Activated CD4-positive, alpha-beta T cell treated with anti-CD3 and anti-CD28 coated beads for 36 hours (primary cell): ENCODE measurements at regions of chr10 and their contacts with region 1.

Region 1: GRCh38 chr10:129971381-129972144 is 7.5 kb upstream of the EBF3 start:
- DNase-seq: peak; percentile 78
- ATAC-seq: peak; percentile 79
- H3K4me3 Mint-ChIP-seq: peak overlapping the region; percentile 38
- H3K27ac Mint-ChIP-seq: no peak overlapping the region
- H3K4me1 Mint-ChIP-seq: peaks cover 9% of the 10 kb centered on the region
- H3K27me3 Mint-ChIP-seq: peaks cover 62% of the 10 kb centered on the region

Region 2: GRCh38 chr10:128263891-128264688 is 1707.5 kb before region 1 on chr10:
- CTCF ChIA-PET with region 1: no interaction called
- POLR2A ChIA-PET with region 1: no interaction called
- intact Hi-C with region 1: loop called in 1 of 2 experiments (anchors 2 kb)
- DNase-seq: peak; percentile 77
- ATAC-seq: peak; percentile 47
- H3K4me3 Mint-ChIP-seq: no peak overlapping the region
- H3K27ac Mint-ChIP-seq: no peak overlapping the region
- H3K4me1 Mint-ChIP-seq: no peaks in the 10 kb centered on the region
- H3K27me3 Mint-ChIP-seq: peaks cover 33% of the 10 kb centered on the region

Region 3: DNA sequence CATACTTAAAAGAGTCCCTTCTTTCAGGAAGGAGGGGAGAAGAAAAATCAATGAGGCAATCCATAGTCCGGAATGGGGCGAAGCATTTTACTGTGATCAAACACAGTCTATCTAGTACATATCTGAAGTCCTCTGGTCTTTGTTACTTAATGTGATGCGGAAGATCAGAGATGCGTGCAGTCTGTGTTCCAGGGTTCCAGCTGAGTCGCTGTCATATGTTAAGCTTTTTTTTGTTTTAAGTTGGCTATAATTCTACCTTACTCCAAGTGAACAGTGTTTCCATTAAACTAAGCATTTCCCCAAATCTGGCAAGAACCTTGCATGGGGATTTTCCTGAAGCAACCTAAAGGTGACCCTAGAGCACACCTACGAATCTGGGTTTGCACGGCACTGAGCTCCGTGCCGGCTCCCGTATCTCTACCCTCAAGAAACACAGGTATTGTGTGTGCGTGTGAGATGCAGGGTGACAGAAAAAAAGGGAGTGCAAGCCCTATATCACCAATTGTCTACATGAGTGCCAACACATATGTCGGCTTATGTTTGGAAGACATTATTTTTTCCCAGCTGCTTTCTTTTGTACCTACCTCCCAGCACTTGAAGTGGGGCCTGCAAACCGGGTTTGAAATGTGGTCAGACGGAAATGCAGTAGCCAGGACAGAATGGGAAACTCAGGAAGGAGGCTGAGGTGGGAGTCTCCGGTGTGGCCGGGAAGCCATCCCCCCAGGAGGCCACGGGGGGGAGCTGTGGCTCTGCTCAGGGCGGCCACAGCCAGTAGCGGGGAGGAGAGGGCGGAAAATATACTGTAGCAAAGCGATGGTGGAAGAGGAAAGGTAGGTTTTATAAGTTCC is 940.3 kb before region 1 on chr10:
- CTCF ChIA-PET with region 1: interaction called, 3 read pairs
- POLR2A ChIA-PET with region 1: no interaction called
- intact Hi-C with region 1: loop called (anchors 1 to 2 kb)
- DNase-seq: peak; percentile 73
- ATAC-seq: peak; percentile 79
- H3K4me3 Mint-ChIP-seq: no peak overlapping the region
- H3K27ac Mint-ChIP-seq: no peak overlapping the region
- H3K4me1 Mint-ChIP-seq: peaks cover 16% of the 10 kb centered on the region
- H3K27me3 Mint-ChIP-seq: peaks cover 20% of the 10 kb centered on the region

Region 4: GRCh38 chr10:129888784-129889616 is 82.6 kb before region 1 on chr10:
- CTCF ChIA-PET with region 1: no interaction called
- POLR2A ChIA-PET with region 1: no interaction called
- intact Hi-C with region 1: loop called (anchors 1 to 5 kb)
- DNase-seq: peak; percentile 70
- ATAC-seq: peak; percentile 61
- H3K4me3 Mint-ChIP-seq: no peak overlapping the region
- H3K27ac Mint-ChIP-seq: no peak overlapping the region
- H3K4me1 Mint-ChIP-seq: no peaks in the 10 kb centered on the region
- H3K27me3 Mint-ChIP-seq: no peaks in the 10 kb centered on the region

Region 5: GRCh38 chr10:130027716-130028464 is 56.3 kb after region 1 on chr10:
- CTCF ChIA-PET with region 1: no interaction called
- POLR2A ChIA-PET with region 1: no interaction called
- intact Hi-C with region 1: no loop called
- DNase-seq: no peak
- ATAC-seq: no peak
- H3K4me3 Mint-ChIP-seq: no peak overlapping the region
- H3K27ac Mint-ChIP-seq: no peak overlapping the region
- H3K4me1 Mint-ChIP-seq: no peaks in the 10 kb centered on the region
- H3K27me3 Mint-ChIP-seq: no peaks in the 10 kb centered on the region

Region 6: DNA sequence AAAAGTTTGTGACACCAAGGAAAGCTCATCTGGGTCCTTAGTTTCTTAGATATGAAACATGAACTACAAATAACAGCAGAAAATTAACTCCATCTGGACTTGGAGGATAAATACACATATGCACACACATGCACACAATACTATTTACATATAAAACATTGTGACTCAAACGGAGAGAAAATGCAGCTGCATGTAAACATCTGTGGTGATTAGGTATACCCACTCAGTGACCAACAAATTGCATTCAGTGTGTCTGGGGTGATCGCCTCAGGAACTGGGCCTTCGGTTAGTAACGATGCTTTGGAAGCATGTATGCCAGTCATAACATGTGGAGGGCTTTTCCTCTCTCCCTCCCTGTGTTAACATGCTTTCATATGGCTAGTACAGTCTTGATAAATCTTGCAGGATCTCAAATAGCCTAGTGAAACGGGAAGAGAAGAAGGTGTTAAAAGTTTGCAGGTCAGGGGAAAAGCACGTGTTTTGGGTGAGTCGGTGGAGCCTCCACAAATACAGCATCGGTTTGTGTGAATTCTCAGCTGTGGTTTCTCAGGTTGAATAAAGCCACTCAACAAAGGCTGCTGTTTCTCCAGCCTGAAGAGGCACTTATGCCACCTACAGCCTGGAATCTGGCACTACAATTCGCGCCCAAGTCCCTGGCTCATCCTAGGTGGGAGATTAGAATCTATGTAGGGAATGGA is 155.9 kb after region 1 on chr10:
- CTCF ChIA-PET with region 1: interaction called, 3 read pairs
- POLR2A ChIA-PET with region 1: no interaction called
- intact Hi-C with region 1: loop called (anchors 1 to 5 kb)
- DNase-seq: peak; percentile 75
- ATAC-seq: peak; percentile 97
- H3K4me3 Mint-ChIP-seq: no peak overlapping the region
- H3K27ac Mint-ChIP-seq: no peak overlapping the region
- H3K4me1 Mint-ChIP-seq: peaks cover 7% of the 10 kb centered on the region
- H3K27me3 Mint-ChIP-seq: peaks cover 18% of the 10 kb centered on the region